ENCODE measurements at regions of chr20 and their contacts with region 1.

Region 1: GRCh38 chr20:43537921-43538877 is 20.6 kb upstream of the SGK2 start:
- DNase-seq: peak; percentile 80
- ATAC-seq: peak; percentile 84
- H3K4me3 Mint-ChIP-seq: no peak overlapping the region
- H3K27ac Mint-ChIP-seq: no peak overlapping the region
- H3K4me1 Mint-ChIP-seq: no peaks in the 10 kb centered on the region
- H3K27me3 Mint-ChIP-seq: no peaks in the 10 kb centered on the region
- CTCF ChIP-seq: peak; percentile 72

Region 2: GRCh38 chr20:43363506-43363905 is 174.7 kb before region 1 on chr20:
- CTCF ChIA-PET with region 1: no interaction called
- POLR2A ChIA-PET with region 1: no interaction called
- DNase-seq: no peak
- ATAC-seq: no peak
- H3K4me3 Mint-ChIP-seq: no peak overlapping the region
- H3K27ac Mint-ChIP-seq: no peak overlapping the region
- H3K4me1 Mint-ChIP-seq: no peaks in the 10 kb centered on the region
- H3K27me3 Mint-ChIP-seq: no peaks in the 10 kb centered on the region; the same call in 1 of the 2 replicates
- CTCF ChIP-seq: no peak

Region 3: DNA sequence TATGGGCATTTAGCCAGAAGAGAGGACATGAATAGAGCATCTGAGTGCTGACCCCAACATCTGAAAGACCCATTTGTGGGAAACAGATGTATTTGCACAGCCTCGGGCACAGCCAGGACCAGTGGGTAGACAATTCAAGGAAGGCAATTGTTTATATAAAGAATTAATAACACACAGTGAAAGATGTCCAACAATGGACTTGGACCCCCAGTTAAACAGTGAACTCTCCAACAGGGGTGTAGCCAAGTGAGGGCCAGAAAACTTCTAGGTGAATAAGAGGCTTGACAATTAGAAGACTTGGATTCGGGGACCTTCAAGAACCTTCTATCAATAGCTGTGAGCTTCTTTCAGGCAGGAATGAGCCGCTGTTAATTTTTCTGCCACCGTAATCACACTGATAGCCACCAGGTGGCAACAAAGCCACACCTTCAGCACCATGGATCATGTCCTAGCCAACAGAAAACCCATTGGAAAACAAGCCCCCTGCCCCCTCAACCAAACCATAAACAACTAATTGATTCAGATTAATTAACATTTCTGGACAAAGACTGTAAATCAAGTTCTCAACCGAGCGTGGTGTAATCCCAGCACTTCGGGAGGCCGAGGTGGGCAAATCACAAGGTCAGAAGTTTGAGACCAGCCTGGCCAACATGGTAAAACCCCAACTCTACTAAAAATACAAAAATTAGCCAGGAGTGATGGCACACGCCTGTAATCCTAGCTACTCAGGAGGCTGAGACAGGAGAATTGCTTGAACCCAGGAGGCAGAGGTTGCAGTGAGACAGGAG is 89.3 kb before region 1 on chr20:
- CTCF ChIA-PET with region 1: interaction called, 19 read pairs
- POLR2A ChIA-PET with region 1: no interaction called
- DNase-seq: peak; percentile 42
- ATAC-seq: peak; percentile 79
- H3K4me3 Mint-ChIP-seq: no peak overlapping the region
- H3K27ac Mint-ChIP-seq: no peak overlapping the region
- H3K4me1 Mint-ChIP-seq: no peaks in the 10 kb centered on the region
- H3K27me3 Mint-ChIP-seq: no peaks in the 10 kb centered on the region; the same call in 1 of the 2 replicates
- CTCF ChIP-seq: peak; percentile 43; the same call in 1 of the 2 replicates

Region 4: DNA sequence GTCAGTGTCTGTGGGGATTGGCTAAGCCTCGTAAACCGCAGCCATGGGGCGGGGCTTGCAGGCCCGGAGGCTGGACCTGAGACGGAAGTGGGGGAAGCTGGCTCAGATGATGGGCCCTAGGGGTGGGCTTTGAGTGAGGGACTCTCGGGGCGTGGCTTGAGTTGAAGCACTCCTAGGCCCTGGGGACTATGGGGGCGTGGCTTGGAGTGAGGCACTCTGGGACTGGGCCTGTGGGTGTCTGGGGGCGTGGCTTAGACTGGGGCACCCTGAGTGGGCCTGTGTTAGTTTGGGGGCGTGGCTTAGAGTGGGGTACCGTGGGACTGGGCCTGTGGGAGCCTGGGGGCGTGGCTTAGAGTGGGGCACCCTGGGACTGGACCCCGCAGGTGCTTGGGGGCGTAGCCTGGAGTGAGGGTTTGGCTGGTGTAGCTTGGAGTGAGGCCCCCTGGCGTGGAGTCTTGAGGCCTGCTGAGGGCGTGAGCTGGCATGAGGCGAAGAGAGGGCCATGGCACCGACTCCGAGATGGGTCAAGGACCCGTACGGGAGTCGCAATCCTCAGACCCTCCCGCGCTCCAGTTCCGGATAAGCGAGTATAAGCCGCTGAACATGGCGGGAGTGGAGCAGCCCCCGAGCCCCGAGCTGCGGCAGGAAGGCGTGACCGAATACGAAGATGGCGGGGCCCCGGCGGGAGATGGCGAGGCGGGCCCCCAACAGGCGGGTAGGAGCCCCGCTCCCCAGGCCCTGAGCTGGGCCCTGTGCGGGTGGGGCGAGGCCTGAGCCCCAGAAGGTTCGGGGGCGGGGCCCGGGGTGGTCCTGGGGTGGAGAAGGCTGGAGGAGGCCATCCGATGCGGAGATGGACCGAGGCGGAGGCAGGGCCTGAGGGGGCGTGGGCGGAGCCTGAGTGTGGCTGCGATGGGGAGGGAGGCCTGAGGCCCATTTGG is 23.9 kb before region 1 on chr20:
- CTCF ChIA-PET with region 1: interaction called, 15 read pairs
- POLR2A ChIA-PET with region 1: no interaction called
- DNase-seq: peak; percentile 97
- ATAC-seq: peak; percentile 96
- H3K4me3 Mint-ChIP-seq: peak overlapping the region; percentile 87
- H3K27ac Mint-ChIP-seq: peak overlapping the region; percentile 80
- H3K4me1 Mint-ChIP-seq: peaks cover 5% of the 10 kb centered on the region
- H3K27me3 Mint-ChIP-seq: no peaks in the 10 kb centered on the region; the same call in 1 of the 2 replicates
- CTCF ChIP-seq: no peak

Region 5: GRCh38 chr20:43590392-43591323 is 52.5 kb after region 1 on chr20 and contains the start of gene IFT52:
- CTCF ChIA-PET with region 1: interaction called, 21 read pairs
- POLR2A ChIA-PET with region 1: no interaction called
- DNase-seq: peak; percentile 92
- ATAC-seq: peak; percentile 97
- H3K4me3 Mint-ChIP-seq: peak within 1 kb of the TSS; percentile 92
- H3K27ac Mint-ChIP-seq: peak within 1 kb of the TSS; percentile 97
- H3K4me1 Mint-ChIP-seq: peaks cover 8% of the 10 kb centered on the region
- H3K27me3 Mint-ChIP-seq: no peaks in the 10 kb centered on the region
- CTCF ChIP-seq: no peak
- total RNA-seq, gene IFT52: 26.0 to 29.1 TPM (median 27.5 TPM) in 3 replicates

Region 6: GRCh38 chr20:43691928-43692524 is 153.8 kb after region 1 on chr20:
- CTCF ChIA-PET with region 1: interaction called, 27 read pairs
- POLR2A ChIA-PET with region 1: no interaction called
- DNase-seq: peak; percentile 70
- ATAC-seq: peak; percentile 65
- H3K4me3 Mint-ChIP-seq: no peak overlapping the region
- H3K27ac Mint-ChIP-seq: no peak overlapping the region
- H3K4me1 Mint-ChIP-seq: no peaks in the 10 kb centered on the region
- H3K27me3 Mint-ChIP-seq: no peaks in the 10 kb centered on the region
- CTCF ChIP-seq: peak; percentile 42; the same call in 1 of the 2 replicates